Activated CD8-positive, alpha-beta T cell treated with anti-CD3 and anti-CD28 coated beads for 36 hours (primary cell): ENCODE measurements at regions of chr1 and their contacts with region 1.

Region 1: GRCh38 chr1:168439456-168440375 is 104.1 kb downstream of the XCL2 start:
- DNase-seq: peak; percentile 94
- ATAC-seq: peak; percentile 92
- H3K4me3 Mint-ChIP-seq: peak overlapping the region; percentile 68
- H3K27ac Mint-ChIP-seq: peak overlapping the region; percentile 85
- H3K4me1 Mint-ChIP-seq: peaks cover 58% of the 10 kb centered on the region
- H3K27me3 Mint-ChIP-seq: no peaks in the 10 kb centered on the region
- CTCF ChIP-seq: peak; percentile 75

Region 2: GRCh38 chr1:168452329-168452728 is 12.6 kb after region 1 on chr1:
- CTCF ChIA-PET with region 1: interaction called, 10 read pairs
- POLR2A ChIA-PET with region 1: interaction called, 4 read pairs
- intact Hi-C with region 1: no loop called
- DNase-seq: no peak
- ATAC-seq: no peak
- H3K4me3 Mint-ChIP-seq: no peak overlapping the region
- H3K27ac Mint-ChIP-seq: no peak overlapping the region
- H3K4me1 Mint-ChIP-seq: peaks cover 20% of the 10 kb centered on the region
- H3K27me3 Mint-ChIP-seq: no peaks in the 10 kb centered on the region
- CTCF ChIP-seq: no peak

Region 3: DNA sequence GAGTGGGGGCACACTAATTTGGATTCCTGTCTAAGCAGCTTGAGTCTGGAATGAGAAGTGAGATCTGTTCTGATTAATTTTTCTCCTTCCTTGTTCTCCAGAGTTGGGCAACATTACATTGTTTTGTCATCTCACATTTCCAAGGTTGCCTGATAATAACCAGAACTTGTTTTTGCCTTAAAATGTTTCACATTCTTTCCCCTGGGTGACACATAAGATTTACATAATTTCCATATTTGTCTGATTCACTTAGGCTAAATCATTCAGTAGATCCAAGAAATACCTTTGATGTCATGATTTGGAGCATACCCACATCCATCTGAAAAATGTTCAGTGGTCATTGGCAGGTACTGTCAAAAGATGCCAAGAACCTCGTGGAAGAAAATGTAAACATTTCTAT is 43.8 kb after region 1 on chr1:
- CTCF ChIA-PET with region 1: interaction called, 10 read pairs
- POLR2A ChIA-PET with region 1: interaction called, 3 read pairs
- intact Hi-C with region 1: no loop called
- DNase-seq: no peak
- ATAC-seq: no peak
- H3K4me3 Mint-ChIP-seq: no peak overlapping the region
- H3K27ac Mint-ChIP-seq: peak overlapping the region; percentile 5
- H3K4me1 Mint-ChIP-seq: peaks cover 53% of the 10 kb centered on the region
- H3K27me3 Mint-ChIP-seq: no peaks in the 10 kb centered on the region
- CTCF ChIP-seq: no peak

Region 4: DNA sequence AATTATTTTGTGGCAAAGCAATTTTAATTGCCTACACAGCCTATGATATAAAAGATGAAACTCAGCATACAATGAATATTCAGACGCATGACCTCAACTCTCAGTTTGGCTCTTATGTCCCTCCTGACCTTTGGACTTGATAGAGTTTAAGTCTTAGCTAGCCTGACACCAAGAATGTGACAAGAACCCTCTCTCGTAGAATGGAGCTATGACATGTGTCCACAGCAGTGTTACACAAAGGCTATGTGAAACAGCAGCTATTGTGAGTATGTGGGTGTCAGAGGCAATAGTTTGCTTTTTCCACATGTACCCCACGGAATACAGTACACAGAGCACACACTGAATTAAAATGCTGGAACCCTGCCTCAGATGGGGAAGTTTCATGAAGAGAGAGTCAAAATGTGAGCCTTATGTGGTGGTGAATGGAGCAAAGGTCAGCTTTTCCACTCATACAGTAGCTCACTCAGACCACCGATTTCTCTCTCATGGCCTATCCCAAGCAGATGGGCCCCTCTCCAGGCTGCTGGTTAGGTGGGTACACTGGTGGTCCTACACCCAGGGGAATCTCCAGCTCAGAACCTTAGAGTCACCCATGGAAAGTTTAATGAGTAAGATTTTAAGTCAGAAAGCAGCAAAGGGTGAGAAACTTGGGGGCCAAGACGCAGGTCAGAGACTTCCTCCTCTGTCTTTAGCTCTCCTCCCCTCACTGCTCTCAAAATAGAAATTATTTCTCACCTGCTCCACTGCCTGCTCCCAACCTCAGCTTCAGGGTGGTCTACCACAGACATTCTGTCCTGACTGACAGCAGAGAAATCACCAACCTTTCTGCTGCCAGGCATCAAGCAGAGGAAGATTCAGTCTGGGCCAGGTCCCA is 114.2 kb after region 1 on chr1:
- CTCF ChIA-PET with region 1: interaction called, 9 read pairs
- POLR2A ChIA-PET with region 1: no interaction called
- intact Hi-C with region 1: loop called (anchors 5 kb)
- DNase-seq: peak; percentile 75
- ATAC-seq: peak; percentile 68
- H3K4me3 Mint-ChIP-seq: peak overlapping the region; percentile 46
- H3K27ac Mint-ChIP-seq: peak overlapping the region; percentile 93
- H3K4me1 Mint-ChIP-seq: peaks cover 63% of the 10 kb centered on the region
- H3K27me3 Mint-ChIP-seq: no peaks in the 10 kb centered on the region
- CTCF ChIP-seq: no peak

Region 5: GRCh38 chr1:168603501-168604110 is 163.9 kb after region 1 on chr1:
- CTCF ChIA-PET with region 1: interaction called, 51 read pairs
- POLR2A ChIA-PET with region 1: no interaction called
- intact Hi-C with region 1: no loop called
- DNase-seq: peak; percentile 84
- ATAC-seq: peak; percentile 91
- H3K4me3 Mint-ChIP-seq: no peak overlapping the region
- H3K27ac Mint-ChIP-seq: no peak overlapping the region
- H3K4me1 Mint-ChIP-seq: no peaks in the 10 kb centered on the region
- H3K27me3 Mint-ChIP-seq: no peaks in the 10 kb centered on the region
- CTCF ChIP-seq: peak; percentile 55

Region 6: GRCh38 chr1:168643152-168643551 is 203.4 kb after region 1 on chr1:
- CTCF ChIA-PET with region 1: no interaction called
- POLR2A ChIA-PET with region 1: no interaction called
- intact Hi-C with region 1: no loop called
- DNase-seq: no peak
- ATAC-seq: no peak
- H3K4me3 Mint-ChIP-seq: no peak overlapping the region
- H3K27ac Mint-ChIP-seq: no peak overlapping the region
- H3K4me1 Mint-ChIP-seq: no peaks in the 10 kb centered on the region
- H3K27me3 Mint-ChIP-seq: no peaks in the 10 kb centered on the region
- CTCF ChIP-seq: no peak